PC-9 (cell line): ENCODE measurements at regions of chr1 and their contacts with region 1.

Region 1: DNA sequence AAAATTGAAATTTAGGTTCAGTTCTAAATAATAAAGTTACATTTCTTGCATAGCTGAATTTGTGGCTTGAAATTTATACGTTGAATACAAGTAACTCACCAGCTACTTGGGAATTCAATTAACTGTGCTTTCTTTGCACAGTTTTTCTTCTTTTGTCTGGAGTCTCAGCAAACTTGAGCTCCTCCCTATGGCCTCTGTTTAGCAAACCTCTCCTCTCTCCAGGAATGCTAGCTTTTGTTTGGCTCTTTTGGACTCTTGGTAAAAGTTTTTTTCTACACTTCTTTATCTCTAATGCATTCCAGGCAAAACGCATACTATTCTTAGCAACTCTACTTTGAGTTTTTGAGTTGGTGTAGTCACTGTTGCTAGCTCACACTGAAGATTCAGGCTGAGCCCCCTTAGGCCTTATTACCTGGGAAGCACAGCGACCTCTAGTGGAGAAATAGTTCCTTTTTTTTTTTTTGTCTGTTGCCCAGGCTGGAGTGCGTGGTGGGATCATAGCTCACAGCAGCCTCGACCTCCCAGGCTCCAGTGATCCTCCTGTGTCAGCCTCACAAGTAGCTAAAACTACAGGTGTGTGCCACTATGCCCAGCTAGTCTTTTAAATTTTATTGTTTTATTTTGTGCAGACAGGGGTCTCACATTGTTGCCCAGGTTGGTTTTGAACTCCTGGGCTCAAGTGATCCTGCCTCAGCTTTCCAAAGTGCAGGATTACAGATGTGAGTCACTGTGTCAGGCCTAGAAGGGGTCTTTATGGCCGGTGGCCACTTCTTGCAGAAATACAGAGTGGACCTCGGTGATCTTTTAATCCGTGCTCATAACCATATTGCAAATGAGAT is 61.7 kb downstream of the CASQ2 start:
- DNase-seq: peak in 1 of 2 experiments; percentile 58
- H3K4me3 ChIP-seq: no peak overlapping the region
- H3K27ac ChIP-seq: no peak overlapping the region
- H3K4me1 ChIP-seq: peaks cover 37% of the 10 kb centered on the region
- H3K27me3 ChIP-seq: no peaks in the 10 kb centered on the region
- CTCF ChIP-seq: peak; percentile 99

Region 2: GRCh38 chr1:115642168-115643072 is 64.4 kb before region 1 on chr1:
- CTCF ChIA-PET with region 1: interaction called, 8 read pairs
- POLR2A ChIA-PET with region 1: no interaction called
- intact Hi-C with region 1: loop called (anchors 2 kb)
- DNase-seq: peak; percentile 64 to 76
- H3K4me3 ChIP-seq: peak overlapping the region; percentile 62
- H3K27ac ChIP-seq: peak overlapping the region; percentile 38
- H3K4me1 ChIP-seq: peaks cover 36% of the 10 kb centered on the region
- H3K27me3 ChIP-seq: no peaks in the 10 kb centered on the region
- CTCF ChIP-seq: peak; percentile 44; the same call in 1 of the 2 replicates

Region 3: DNA sequence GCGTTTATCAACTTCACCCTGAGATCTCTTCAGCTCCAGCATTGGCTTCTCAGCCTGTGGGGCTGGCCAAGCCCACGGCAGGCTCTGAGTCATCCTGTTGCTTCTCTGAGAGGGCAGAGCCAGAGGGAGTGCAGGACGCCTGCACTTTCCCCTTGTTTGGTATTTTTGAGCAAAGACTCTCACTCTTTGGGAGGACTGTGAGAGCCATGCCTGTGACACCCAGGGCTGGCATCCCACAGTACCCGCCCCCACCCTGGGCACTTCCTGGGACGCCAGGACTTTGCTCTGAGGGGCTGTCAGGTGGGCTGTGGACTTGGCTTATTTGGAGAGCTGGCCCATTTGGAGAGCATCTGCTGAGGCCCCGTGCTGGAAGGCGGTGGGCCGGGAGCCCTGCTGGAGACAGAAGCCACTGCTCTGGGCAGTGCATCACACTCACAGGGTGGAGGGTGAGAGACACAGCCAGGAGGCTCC is 27.6 kb before region 1 on chr1:
- CTCF ChIA-PET with region 1: interaction called, 11 read pairs
- POLR2A ChIA-PET with region 1: no interaction called
- intact Hi-C with region 1: no loop called
- DNase-seq: peak; percentile 67 to 93
- H3K4me3 ChIP-seq: no peak overlapping the region
- H3K27ac ChIP-seq: peak overlapping the region; percentile 57
- H3K4me1 ChIP-seq: peaks cover 49% of the 10 kb centered on the region
- H3K27me3 ChIP-seq: no peaks in the 10 kb centered on the region
- CTCF ChIP-seq: no peak

Region 4: GRCh38 chr1:115725600-115725999 is 18.8 kb after region 1 on chr1:
- CTCF ChIA-PET with region 1: interaction called, 12 read pairs
- POLR2A ChIA-PET with region 1: no interaction called
- intact Hi-C with region 1: no loop called
- DNase-seq: no peak
- H3K4me3 ChIP-seq: no peak overlapping the region
- H3K27ac ChIP-seq: no peak overlapping the region
- H3K4me1 ChIP-seq: peaks cover 21% of the 10 kb centered on the region
- H3K27me3 ChIP-seq: no peaks in the 10 kb centered on the region
- CTCF ChIP-seq: no peak

Region 5: DNA sequence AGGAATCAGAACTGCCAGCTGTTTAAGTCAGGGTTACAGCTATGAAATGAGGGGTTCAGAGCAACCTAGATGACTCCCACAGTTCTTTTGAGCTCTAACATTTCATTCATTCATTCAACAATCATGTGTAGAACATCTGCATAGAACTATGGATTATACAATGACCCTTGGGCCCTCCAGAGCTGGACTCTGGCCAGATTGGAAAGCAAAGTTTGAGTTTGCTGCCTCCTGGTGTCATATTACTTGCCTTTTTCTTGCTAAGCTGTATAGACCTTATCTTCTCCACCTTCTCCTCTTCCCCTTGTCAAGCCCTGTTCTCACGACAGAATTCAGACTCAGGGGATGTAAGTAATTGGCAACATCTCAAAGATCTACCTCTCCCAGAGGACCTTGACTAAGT is 57.7 kb after region 1 on chr1:
- CTCF ChIA-PET with region 1: interaction called, 21 read pairs
- POLR2A ChIA-PET with region 1: no interaction called
- intact Hi-C with region 1: no loop called
- DNase-seq: peak; percentile 43 to 70
- H3K4me3 ChIP-seq: no peak overlapping the region
- H3K27ac ChIP-seq: no peak overlapping the region
- H3K4me1 ChIP-seq: peaks cover 19% of the 10 kb centered on the region
- H3K27me3 ChIP-seq: no peaks in the 10 kb centered on the region
- CTCF ChIP-seq: peak; percentile 85

Region 6: GRCh38 chr1:115793162-115793561 is 86.4 kb after region 1 on chr1:
- CTCF ChIA-PET with region 1: no interaction called
- POLR2A ChIA-PET with region 1: no interaction called
- intact Hi-C with region 1: no loop called
- DNase-seq: no peak
- H3K4me3 ChIP-seq: no peak overlapping the region
- H3K27ac ChIP-seq: no peak overlapping the region
- H3K4me1 ChIP-seq: peaks cover 8% of the 10 kb centered on the region
- H3K27me3 ChIP-seq: no peaks in the 10 kb centered on the region
- CTCF ChIP-seq: no peak

Region 7: DNA sequence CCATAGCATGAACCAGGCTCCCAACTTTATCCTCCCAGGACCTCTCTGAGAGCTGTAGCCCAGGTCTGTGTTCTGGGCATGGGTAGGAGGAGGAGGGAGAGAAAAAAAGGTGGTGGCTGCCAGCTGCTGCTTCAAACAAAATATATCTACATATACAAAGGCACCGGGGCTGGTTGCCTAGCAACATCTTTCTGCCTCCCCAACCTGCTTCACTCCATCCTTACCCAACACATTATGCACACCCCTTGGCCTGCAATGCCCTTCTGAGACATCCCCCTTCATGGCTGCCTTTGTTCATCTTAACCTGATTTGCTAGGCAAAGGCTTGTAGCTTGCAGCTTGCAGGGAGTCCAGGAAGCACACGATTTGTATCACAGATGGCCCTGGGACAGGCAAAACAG is 639.0 kb after region 1 on chr1:
- CTCF ChIA-PET with region 1: no interaction called
- POLR2A ChIA-PET with region 1: no interaction called
- intact Hi-C with region 1: no loop called
- DNase-seq: no peak
- H3K4me3 ChIP-seq: no peak overlapping the region
- H3K27ac ChIP-seq: no peak overlapping the region
- H3K4me1 ChIP-seq: peaks cover 25% of the 10 kb centered on the region
- H3K27me3 ChIP-seq: no peaks in the 10 kb centered on the region
- CTCF ChIP-seq: no peak